ENCODE measurements at regions of chr19 and their contacts with region 1.

Region 1: DNA sequence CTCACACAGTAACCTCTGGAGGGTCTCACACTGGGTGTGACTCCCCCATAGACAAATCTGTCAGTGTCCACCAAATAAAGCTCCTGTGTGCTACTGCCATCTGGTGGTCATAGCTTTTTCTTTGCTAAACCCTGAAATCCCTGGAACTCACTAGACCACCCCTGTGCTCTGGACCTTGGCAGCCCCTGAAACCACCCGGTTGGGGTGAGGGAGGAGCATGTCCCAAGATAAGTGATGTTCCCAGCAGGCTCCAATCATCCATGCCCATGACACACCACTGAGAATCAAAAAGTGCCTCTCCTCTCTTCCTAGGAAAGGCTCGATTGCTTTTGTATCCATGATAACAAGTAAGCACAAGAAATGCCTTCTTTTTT is 6.5 kb upstream of the HSD17B14 start:
- DNase-seq: peak; percentile 63
- ATAC-seq: peak; percentile 52
- H3K4me3 Mint-ChIP-seq: no peak overlapping the region
- H3K27ac Mint-ChIP-seq: no peak overlapping the region
- H3K4me1 Mint-ChIP-seq: no peaks in the 10 kb centered on the region
- H3K27me3 Mint-ChIP-seq: no peaks in the 10 kb centered on the region

Region 2: GRCh38 chr19:48618916-48619691 is 223.7 kb before region 1 on chr19 and contains the starts of genes RPL18 and SPHK2:
- CTCF ChIA-PET with region 1: no interaction called
- DNase-seq: peak; percentile 98
- ATAC-seq: peak; percentile 79
- H3K4me3 Mint-ChIP-seq: peak within 1 kb of the TSS; percentile 98
- H3K27ac Mint-ChIP-seq: peak within 1 kb of the TSS; percentile 99
- H3K4me1 Mint-ChIP-seq: peaks cover 51% of the 10 kb centered on the region
- H3K27me3 Mint-ChIP-seq: no peaks in the 10 kb centered on the region
- total RNA-seq, gene RPL18: 1,413 to 1,465 TPM
- total RNA-seq, gene SPHK2: 37.3 to 43.4 TPM

Region 3: GRCh38 chr19:48646001-48646721 is 196.6 kb before region 1 on chr19 and contains the start of gene CA11:
- CTCF ChIA-PET with region 1: interaction called, 12 read pairs
- DNase-seq: peak; percentile 94
- ATAC-seq: peak; percentile 90
- H3K4me3 Mint-ChIP-seq: peak within 1 kb of the TSS; percentile 74
- H3K27ac Mint-ChIP-seq: peak within 1 kb of the TSS; percentile 77
- H3K4me1 Mint-ChIP-seq: peaks cover 33% of the 10 kb centered on the region
- H3K27me3 Mint-ChIP-seq: peaks cover 2% of the 10 kb centered on the region
- total RNA-seq, gene CA11: 6.0 to 7.2 TPM

Region 4: GRCh38 chr19:48795055-48795684 is 47.6 kb before region 1 on chr19:
- CTCF ChIA-PET with region 1: interaction called, 124 read pairs
- DNase-seq: peak; percentile 92
- ATAC-seq: peak; percentile 99
- H3K4me3 Mint-ChIP-seq: peak overlapping the region; percentile 82
- H3K27ac Mint-ChIP-seq: peak overlapping the region; percentile 82
- H3K4me1 Mint-ChIP-seq: peaks cover 11% of the 10 kb centered on the region
- H3K27me3 Mint-ChIP-seq: no peaks in the 10 kb centered on the region

Region 5: DNA sequence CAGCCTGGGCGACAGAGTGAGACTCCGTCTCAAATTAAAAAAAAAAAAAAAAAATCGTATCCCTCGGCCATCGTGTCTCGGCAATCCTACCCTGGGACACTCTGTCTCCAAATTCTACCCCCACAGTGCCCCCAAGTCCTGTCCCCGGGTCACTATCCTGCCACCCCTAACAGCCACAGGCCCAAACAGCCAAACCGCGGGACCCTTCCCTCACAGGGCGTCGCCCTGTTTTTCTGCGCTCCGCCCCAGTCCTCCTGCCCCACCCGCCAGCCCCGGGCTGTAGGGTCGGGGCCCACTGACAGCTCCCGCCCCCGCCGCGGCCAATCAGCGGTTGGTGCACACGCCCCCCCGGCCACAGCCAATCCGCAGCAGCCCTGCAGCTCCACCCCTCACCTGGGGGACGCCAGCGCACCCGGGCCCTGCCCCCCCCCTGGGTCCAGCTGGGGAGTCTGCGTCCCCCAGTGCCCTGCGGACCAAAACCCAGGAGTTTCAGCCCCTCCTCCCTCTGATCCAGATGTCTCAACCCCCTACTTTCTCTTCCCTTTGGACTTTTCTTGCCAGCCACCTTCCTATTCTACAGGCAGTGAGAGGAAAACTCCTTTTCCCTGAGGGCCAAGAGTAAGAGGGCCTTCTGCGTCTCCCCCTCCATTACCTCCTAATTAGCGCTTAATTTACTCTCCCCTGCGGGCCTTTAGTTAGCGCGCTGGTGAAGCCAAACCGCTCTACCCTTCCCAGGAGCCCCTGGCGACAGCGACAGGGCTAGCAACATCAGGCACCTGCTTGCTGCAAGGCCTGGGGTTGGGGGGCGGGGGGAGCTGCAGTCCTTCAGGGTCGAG is 30.5 kb before region 1 on chr19:
- CTCF ChIA-PET with region 1: interaction called, 24 read pairs
- DNase-seq: peak; percentile 81
- ATAC-seq: peak; percentile 67
- H3K4me3 Mint-ChIP-seq: peak overlapping the region; percentile 71
- H3K27ac Mint-ChIP-seq: peak overlapping the region; percentile 74
- H3K4me1 Mint-ChIP-seq: peaks cover 27% of the 10 kb centered on the region
- H3K27me3 Mint-ChIP-seq: no peaks in the 10 kb centered on the region

Region 6: GRCh38 chr19:48858984-48859710 is 16.4 kb after region 1 on chr19:
- CTCF ChIA-PET with region 1: interaction called, 51 read pairs
- DNase-seq: peak; percentile 87
- ATAC-seq: peak; percentile 90
- H3K4me3 Mint-ChIP-seq: peak overlapping the region; percentile 78
- H3K27ac Mint-ChIP-seq: peak overlapping the region; percentile 77
- H3K4me1 Mint-ChIP-seq: peaks cover 4% of the 10 kb centered on the region
- H3K27me3 Mint-ChIP-seq: no peaks in the 10 kb centered on the region

Region 7: DNA sequence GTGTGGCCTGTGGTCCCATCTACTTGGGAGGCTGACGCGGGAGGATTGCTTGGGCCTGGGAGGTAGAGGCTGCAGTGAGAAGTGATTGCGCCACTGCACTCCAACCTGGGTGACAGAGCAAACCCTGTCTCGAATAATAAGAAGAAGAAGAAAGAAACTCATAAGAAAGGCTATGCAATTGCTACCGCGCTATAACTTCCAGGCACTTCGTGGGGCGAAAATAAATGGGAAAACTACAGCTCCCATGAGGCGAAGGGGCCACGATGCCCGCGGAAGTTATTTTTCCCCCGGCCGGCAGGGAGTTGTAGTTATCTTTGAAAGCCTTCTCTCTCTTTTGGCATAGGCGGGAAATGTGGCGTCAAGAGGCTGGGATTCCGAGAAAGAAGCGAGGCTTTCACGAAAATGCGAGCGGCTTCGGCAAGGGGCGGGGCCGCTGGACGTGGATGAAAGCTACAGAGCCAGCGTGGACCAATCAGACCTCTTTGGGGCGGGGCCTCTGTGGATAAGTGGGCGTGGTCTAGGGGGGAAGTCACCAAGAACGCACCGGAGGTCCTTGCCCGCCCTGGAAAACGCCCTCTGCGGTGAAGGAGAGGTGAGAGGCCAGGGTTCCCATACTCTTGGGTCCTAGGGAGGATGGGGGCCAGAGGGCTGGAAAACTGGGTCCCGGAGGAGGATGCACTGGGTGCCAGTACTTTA is 57.2 kb after region 1 on chr19 and contains the start of gene NUCB1:
- CTCF ChIA-PET with region 1: interaction called, 10 read pairs
- DNase-seq: peak; percentile 100
- ATAC-seq: peak; percentile 92
- H3K4me3 Mint-ChIP-seq: peak within 1 kb of the TSS; percentile 98
- H3K27ac Mint-ChIP-seq: peak within 1 kb of the TSS; percentile 98
- H3K4me1 Mint-ChIP-seq: peaks cover 33% of the 10 kb centered on the region
- H3K27me3 Mint-ChIP-seq: peaks cover 17% of the 10 kb centered on the region
- total RNA-seq, gene NUCB1: 185 to 226 TPM

Region 8: DNA sequence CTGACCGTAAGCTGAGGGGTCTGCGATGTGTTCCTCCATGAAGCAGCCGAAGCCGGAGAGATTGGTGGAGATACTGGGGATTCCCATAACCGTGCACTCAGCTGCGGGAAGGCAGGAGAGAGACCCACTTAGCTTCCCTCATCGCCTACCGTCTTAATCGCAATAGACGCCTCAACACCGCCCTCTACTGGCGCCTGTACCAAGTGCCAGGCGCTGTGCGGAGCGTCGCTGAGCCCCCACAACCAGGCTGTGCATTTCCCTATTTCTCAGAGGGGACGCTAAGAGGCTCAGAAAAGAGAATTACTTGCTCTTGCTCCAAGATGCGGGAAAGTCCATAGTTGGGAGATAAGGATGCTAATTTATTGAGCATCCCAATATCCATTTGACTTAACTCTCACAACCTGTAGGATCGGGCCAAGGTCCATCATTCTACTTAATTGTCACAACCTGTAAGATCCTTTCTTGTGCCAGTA is 128.2 kb after region 1 on chr19:
- CTCF ChIA-PET with region 1: interaction called, 20 read pairs
- DNase-seq: peak; percentile 87
- ATAC-seq: peak; percentile 52
- H3K4me3 Mint-ChIP-seq: no peak overlapping the region
- H3K27ac Mint-ChIP-seq: no peak overlapping the region
- H3K4me1 Mint-ChIP-seq: peaks cover 31% of the 10 kb centered on the region
- H3K27me3 Mint-ChIP-seq: no peaks in the 10 kb centered on the region

Measured in activated CD8-positive, alpha-beta memory T cell treated with anti-CD3 and anti-CD28 coated beads, Interleukin-2, amount 10 ng/mL, durations not matched to agents 7 days and 5 days (primary cell).